ENCODE measurements at regions of chr17 and their contacts with region 1.

Region 1: DNA sequence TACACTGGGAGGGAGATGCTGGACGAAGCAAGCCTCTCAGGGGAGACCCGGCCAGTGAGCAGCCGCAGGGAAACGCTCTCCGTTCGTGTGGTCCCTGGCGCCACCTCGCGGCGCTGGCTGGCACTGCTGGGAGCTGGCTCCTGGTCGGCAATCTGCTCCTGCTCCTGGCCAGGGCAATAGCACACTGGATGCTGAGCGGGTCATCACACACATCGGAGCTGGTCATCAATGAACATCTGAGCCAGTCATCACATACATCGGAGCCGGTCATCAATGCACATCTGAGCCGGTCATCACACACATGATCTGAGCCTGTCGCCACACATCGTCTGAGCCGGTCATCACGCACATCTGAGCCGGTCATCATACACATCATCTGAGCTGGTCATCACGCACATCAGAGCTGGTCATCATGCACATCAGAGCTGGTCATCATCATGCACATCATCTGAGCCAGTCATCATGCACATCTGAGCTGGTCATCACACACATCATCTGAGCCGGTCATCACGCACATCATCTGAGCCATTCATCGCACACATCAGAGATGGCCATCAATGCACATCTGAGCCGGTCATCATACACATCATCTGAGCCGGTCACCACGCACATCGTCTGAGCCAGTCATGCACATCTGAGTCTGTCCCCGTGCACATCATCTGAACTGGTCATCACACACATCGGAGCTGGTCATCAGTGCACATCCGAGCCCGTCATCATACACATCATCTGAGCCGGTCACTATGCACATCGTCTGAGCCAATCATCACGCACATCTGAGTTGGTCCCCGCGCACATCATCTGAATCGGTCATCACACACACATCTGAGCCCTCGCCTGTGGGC is 217.3 kb downstream of the RBFOX3 start:
- DNase-seq: peak; percentile 80
- H3K4me3 Mint-ChIP-seq: no peak overlapping the region
- H3K27ac Mint-ChIP-seq: no peak overlapping the region
- H3K4me1 Mint-ChIP-seq: peaks cover 3% of the 10 kb centered on the region
- H3K27me3 Mint-ChIP-seq: peaks cover 47% of the 10 kb centered on the region

Region 2: DNA sequence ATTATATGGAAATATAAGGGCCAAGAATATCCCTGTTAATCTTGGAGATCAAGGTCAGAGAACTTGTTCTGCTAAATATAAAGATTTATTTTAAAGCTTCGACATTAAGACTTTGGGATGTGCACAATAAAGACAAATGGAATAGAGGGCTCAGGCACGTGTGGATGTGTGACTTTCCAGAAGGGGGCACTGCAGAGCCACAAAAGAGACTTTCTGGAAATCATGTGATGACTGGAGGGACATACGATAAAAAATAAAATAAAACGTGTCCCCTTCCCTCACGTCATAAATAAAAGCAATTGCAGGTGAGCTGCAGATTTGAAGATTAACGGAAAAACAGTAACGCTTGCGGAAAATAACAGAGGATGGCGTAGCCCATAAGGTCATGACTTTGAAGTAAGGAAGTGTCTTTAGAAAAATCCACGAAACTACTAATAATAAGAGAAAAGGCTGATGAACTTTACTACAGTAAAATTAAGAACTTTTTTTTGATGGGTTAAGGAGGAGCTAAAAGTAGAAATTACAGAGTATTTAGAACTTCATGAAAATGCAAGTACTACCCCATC is 328.4 kb before region 1 on chr17:
- CTCF ChIA-PET with region 1: interaction called, 6 read pairs
- intact Hi-C with region 1: loop called (anchors 1 kb)
- DNase-seq: peak; percentile 80
- H3K4me3 Mint-ChIP-seq: no peak overlapping the region
- H3K27ac Mint-ChIP-seq: no peak overlapping the region
- H3K4me1 Mint-ChIP-seq: peaks cover 3% of the 10 kb centered on the region
- H3K27me3 Mint-ChIP-seq: no peaks in the 10 kb centered on the region

Region 3: DNA sequence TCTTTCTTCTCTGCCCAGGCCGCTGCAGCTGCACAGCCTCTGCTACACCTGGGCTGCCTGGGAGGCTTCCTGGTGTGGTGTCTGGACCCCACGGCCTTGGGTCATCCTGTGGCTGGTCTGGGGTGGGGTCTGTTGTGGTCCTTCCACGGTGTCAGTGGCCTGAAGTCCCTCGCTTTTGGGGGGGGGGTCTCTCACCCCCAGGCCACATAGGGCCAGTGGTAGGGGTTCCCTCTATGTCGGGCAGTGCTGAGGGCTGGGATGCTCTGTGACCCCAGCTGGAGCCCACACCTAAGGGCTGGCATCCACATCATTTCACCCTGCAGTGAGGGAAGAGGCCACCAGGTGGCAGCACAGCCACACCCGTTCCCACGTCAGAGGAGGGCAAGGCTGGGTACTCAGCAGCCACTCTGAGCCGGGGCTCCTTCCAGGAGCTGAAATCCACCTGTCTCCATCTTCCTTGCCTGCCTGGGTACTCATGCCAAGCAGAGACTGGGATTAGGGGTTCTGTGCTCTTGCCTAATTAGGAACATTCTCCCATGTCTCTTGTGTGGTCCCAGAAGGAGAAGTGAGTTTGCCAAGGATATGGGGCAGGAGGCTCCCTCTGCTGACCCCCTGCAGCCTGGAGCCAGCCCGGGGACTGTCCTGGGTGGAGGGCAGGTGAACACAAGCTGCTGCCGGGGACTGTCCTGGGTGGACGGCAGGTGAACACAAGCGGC is 306.0 kb before region 1 on chr17:
- CTCF ChIA-PET with region 1: interaction called, 61 read pairs
- intact Hi-C with region 1: loop called (anchors 1 kb)
- DNase-seq: peak; percentile 84
- H3K4me3 Mint-ChIP-seq: no peak overlapping the region
- H3K27ac Mint-ChIP-seq: no peak overlapping the region
- H3K4me1 Mint-ChIP-seq: no peaks in the 10 kb centered on the region
- H3K27me3 Mint-ChIP-seq: peaks cover 4% of the 10 kb centered on the region

Region 4: DNA sequence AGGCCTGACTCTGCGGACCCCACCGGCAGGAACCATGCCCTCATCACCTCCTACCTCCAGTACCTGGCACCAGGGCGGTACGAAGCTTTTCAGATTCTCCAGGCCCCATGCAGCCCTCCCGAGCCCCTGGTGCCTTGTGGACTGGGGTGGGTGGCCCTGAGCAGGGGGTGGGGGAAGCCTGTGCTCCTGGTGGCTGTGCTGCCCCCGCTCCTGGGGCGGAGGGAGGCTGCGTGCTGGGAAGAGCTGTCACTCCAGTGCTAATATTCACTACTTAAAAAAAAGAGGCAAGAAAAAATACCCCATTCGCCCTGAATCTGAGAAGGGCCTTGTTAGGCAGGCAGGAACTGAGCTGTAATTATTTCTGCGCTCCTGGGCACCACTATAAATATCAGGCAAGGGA is 207.2 kb before region 1 on chr17:
- CTCF ChIA-PET with region 1: interaction called, 3 read pairs
- intact Hi-C with region 1: loop called (anchors 2 kb)
- DNase-seq: no peak
- H3K4me3 Mint-ChIP-seq: no peak overlapping the region
- H3K27ac Mint-ChIP-seq: no peak overlapping the region
- H3K4me1 Mint-ChIP-seq: peaks cover 3% of the 10 kb centered on the region
- H3K27me3 Mint-ChIP-seq: peaks cover 45% of the 10 kb centered on the region